ENCODE measurements at regions of chr2 and their contacts with region 1.

Region 1: DNA sequence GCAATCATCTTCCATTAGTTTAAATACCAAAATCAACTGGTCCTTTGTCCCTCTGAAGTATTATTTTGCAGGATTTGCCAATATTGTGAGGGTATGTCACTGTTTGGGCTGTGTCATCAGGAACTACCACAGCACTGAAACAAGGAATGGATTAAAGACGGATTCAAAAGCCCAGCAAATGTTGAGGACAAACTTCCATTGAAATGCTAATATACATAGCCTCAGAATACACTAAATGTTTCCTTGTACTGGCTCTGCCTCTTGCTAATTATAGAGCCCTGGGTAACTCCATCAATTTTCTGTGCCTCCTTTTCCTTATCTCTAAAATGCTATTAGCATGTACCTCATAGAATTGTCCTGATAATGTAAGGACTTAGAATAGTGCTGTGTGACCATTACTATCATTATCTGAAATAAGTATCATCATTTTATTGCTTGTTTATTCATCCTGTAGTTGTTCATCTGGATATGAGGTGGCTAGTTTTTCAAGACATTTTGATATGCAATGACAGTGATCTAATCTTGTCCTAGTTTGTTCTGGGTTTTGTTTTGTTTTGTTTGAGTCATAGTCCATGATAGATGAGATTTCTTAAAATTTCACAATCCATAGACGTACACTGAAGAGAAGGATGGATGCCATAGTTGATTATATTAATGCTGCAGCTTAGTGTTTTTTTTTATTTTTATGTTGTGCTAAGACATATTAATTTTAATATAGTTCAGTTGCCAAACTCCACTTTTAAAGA is 333.4 kb upstream of the KCNH7 start:
- DNase-seq: no peak
- H3K4me3 ChIP-seq: no peak overlapping the region
- H3K27ac ChIP-seq: no peak overlapping the region
- H3K27me3 ChIP-seq: no peaks in the 10 kb centered on the region
- CTCF ChIP-seq: no peak

Region 2: DNA sequence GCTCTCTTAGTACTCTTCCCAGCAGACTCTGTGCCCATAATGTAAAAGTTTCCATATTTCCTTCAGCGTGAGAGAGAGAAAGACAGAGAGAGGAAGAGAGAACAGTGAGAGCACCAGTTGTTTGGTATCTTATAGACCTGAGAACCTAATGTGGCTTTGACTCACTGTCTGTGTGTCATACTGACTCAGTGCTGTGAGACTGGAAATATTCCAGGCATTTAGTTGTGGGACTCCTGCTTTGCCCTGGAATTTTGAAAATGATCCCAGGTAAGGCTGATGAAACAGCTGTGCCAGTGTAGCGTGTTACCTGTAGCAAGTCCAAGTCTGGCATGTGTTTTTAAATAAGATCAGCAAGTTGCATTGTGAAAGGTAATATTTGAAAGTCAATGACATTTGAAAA is 245.5 kb before region 1 on chr2:
- CTCF ChIA-PET with region 1: no interaction called
- POLR2A ChIA-PET with region 1: no interaction called
- DNase-seq: no peak
- H3K4me3 ChIP-seq: no peak overlapping the region
- H3K27ac ChIP-seq: no peak overlapping the region
- H3K27me3 ChIP-seq: no peaks in the 10 kb centered on the region
- CTCF ChIP-seq: no peak

Region 3: GRCh38 chr2:163155279-163155883 is 16.6 kb before region 1 on chr2:
- CTCF ChIA-PET with region 1: interaction called, 117 read pairs
- POLR2A ChIA-PET with region 1: no interaction called
- DNase-seq: no peak
- H3K4me3 ChIP-seq: no peak overlapping the region
- H3K27ac ChIP-seq: no peak overlapping the region
- H3K27me3 ChIP-seq: no peaks in the 10 kb centered on the region
- CTCF ChIP-seq: peak; percentile 69

Region 4: DNA sequence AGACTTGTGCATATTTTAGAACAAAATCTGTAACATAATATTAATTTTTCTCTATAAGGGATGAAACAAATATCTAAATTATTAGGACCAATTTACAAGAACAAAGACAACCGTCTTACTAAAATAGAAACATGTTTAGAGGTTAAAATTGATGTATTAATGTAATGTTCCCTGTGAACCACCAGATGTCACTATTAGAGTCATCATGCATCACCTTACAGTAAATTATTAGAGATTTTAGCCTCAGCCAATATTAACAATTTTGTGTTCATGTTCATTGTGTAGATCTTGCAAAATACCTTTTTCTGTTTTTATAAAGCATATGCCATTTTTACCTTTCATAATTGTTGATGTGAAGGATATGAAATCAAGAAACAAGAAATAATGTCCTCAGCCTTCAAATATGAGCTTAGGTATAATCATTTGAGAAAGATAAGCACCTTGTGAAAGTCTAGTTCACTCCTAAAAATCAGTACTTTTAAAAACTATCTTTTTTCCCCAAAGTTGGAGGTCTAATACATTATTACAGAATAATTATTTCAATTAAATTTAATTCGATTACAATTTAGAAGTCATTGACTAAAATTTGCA is 10.9 kb after region 1 on chr2:
- CTCF ChIA-PET with region 1: interaction called, 148 read pairs
- POLR2A ChIA-PET with region 1: no interaction called
- DNase-seq: no peak
- H3K4me3 ChIP-seq: no peak overlapping the region
- H3K27ac ChIP-seq: no peak overlapping the region
- H3K27me3 ChIP-seq: no peaks in the 10 kb centered on the region
- CTCF ChIP-seq: peak; percentile 63

Region 5: DNA sequence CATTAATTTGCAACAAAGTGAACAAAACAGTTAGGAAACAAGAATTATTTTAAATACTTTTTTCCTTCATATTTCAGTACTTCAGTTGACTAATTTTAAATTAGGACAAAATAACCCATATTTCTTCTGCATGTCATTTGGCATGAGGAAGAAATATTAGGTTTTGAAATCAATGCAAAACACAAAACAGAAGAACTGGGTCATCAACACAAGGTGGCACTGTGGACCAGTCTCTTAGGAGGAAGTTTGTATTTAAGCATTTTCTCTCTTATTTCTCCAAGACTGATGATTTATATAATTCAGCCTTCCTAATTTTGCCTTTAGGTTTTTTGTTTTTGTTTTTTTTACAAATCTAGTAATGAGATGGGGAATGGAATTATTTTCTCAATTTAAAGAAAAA is 19.4 kb after region 1 on chr2:
- CTCF ChIA-PET with region 1: interaction called, 11 read pairs
- POLR2A ChIA-PET with region 1: no interaction called
- DNase-seq: no peak
- H3K4me3 ChIP-seq: no peak overlapping the region
- H3K27ac ChIP-seq: no peak overlapping the region
- H3K27me3 ChIP-seq: no peaks in the 10 kb centered on the region
- CTCF ChIP-seq: peak; percentile 73

Region 6: GRCh38 chr2:164430166-164430783 is 1258.3 kb after region 1 on chr2:
- CTCF ChIA-PET with region 1: interaction called, 11 read pairs
- POLR2A ChIA-PET with region 1: no interaction called
- DNase-seq: peak; percentile 4
- H3K4me3 ChIP-seq: no peak overlapping the region
- H3K27ac ChIP-seq: no peak overlapping the region
- H3K27me3 ChIP-seq: no peaks in the 10 kb centered on the region
- CTCF ChIP-seq: peak; percentile 74

Region 7: DNA sequence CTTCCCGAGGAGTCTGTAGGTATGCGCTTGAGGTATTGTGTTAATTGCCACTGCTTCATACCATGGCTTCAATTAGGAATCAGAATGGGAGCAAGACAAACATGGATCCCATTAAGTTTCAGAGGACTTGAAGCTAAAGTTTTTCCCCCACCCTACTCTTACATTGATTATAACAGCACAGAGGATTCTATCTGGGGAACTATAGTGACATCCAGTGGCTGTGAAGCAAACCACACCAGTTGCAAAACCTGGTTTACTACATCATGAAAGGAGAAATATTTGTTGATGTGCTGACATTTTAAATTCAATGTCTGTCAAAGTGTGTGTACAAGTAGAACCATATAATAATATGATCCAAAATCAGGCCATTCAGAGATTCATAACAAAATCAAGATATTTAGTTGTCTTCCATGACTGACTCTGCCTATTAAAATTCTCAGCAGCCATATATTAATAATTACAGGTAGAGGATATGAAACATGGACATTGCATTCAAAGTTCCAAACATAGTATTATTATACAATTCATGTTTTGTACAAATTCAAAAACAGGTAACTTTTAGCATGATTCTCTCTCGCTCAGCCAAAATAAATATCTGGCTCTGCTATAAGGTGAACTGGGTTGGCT is 1366.4 kb after region 1 on chr2:
- CTCF ChIA-PET with region 1: interaction called, 13 read pairs
- POLR2A ChIA-PET with region 1: no interaction called
- DNase-seq: no peak
- H3K4me3 ChIP-seq: no peak overlapping the region
- H3K27ac ChIP-seq: no peak overlapping the region
- H3K27me3 ChIP-seq: no peaks in the 10 kb centered on the region
- CTCF ChIP-seq: peak; percentile 72

Measured in AG04450 (cell line).